Kidney (tissue), 22 donors: ENCODE measurements at regions of chr18 and their contacts with region 1.

Region 1: DNA sequence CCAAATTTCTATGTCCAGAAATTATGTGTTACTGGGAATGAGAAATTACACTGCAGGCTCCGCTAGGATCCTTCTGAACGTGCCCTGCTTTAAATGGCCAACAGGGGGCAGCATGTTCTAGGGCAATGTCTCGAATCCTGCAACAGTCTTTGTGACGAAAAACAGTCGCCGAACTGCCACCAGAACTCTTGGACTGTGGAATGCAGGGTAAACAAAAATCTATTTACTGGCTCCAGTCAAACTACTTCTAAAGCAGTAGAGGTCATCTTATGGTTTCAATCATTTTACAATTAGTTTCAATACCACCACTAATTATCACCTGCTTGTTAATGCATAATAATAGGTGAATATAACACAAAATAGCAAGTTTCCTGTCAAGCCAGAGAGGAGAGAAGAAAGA is 9.8 kb upstream of the ZNF397 start:
- DNase-seq: peak; percentile 64 to 93 (median 84)
- H3K4me3 ChIP-seq: peak overlapping the region in 2 of 3 donors; percentile 21 to 61
- H3K27ac ChIP-seq: no peak overlapping the region
- H3K4me1 ChIP-seq: no peaks in the 10 kb centered on the region
- H3K27me3 ChIP-seq: no peaks in the 10 kb centered on the region
- CTCF ChIP-seq: peak; percentile 93

Region 2: GRCh38 chr18:34971313-34971712 is 259.7 kb before region 1 on chr18:
- intact Hi-C with region 1: no loop called
- DNase-seq: no peak
- H3K4me3 ChIP-seq: no peak overlapping the region
- H3K27ac ChIP-seq: no peak overlapping the region
- H3K4me1 ChIP-seq: no peaks in the 10 kb centered on the region
- H3K27me3 ChIP-seq: peaks cover 6% of the 10 kb centered on the region
- CTCF ChIP-seq: no peak

Region 3: GRCh38 chr18:35355140-35355618 is 124.1 kb after region 1 on chr18:
- intact Hi-C with region 1: loop called (anchors 10 kb)
- DNase-seq: peak; percentile 74 to 94 (median 84)
- H3K4me3 ChIP-seq: peak overlapping the region in 1 of 3 donors; percentile 23
- H3K27ac ChIP-seq: no peak overlapping the region
- H3K4me1 ChIP-seq: no peaks in the 10 kb centered on the region
- H3K27me3 ChIP-seq: no peaks in the 10 kb centered on the region
- CTCF ChIP-seq: peak; percentile 70